ENCODE measurements at regions of chrX and their contacts with region 1.

Region 1: DNA sequence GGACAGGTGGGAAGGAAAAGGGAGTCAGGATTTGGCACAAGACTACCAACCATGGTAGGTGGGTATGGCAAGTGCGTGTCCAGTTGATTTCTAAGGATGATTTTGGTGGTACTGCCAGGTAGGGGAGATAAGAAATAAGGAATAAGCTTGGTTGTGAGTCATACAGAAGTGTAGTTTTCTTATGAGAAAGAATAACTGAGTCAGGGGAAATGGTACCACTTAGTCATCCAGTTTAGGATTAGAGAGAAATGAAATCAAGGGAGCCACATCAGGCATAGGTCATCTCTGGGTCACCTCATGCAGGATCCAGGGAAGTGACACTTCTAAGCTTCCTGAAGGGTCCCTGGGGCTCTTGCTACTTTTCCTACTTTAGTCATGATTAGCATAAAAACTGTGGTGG is 107.1 kb upstream of the C1GALT1C1 start:
- DNase-seq: peak in 1 of 2 experiments; percentile 83
- H3K4me3 ChIP-seq: peak overlapping the region; percentile 40; the same call in 1 of the 2 replicates
- H3K27ac ChIP-seq: peak overlapping the region; percentile 99
- H3K4me1 ChIP-seq: peaks cover 79% of the 10 kb centered on the region
- H3K27me3 ChIP-seq: no peaks in the 10 kb centered on the region
- CTCF ChIP-seq: no peak

Region 2: GRCh38 chrX:120308959-120309872 is 427.8 kb before region 1 on chrX:
- CTCF ChIA-PET with region 1: no interaction called
- POLR2A ChIA-PET with region 1: no interaction called
- intact Hi-C with region 1: loop called (anchors 10 kb)
- DNase-seq: peak in 1 of 2 experiments; percentile 75
- H3K4me3 ChIP-seq: peak overlapping the region; percentile 60
- H3K27ac ChIP-seq: no peak overlapping the region
- H3K4me1 ChIP-seq: 0 out of 2 replicates have a peak, but pooled peaks cover 3% of the 10 kb centered on the region
- H3K27me3 ChIP-seq: no peaks in the 10 kb centered on the region
- CTCF ChIP-seq: no peak; the same call in 1 of the 2 replicates

Region 3: GRCh38 chrX:120499301-120500072 is 237.5 kb before region 1 on chrX:
- CTCF ChIA-PET with region 1: no interaction called
- POLR2A ChIA-PET with region 1: no interaction called
- intact Hi-C with region 1: loop called (anchors 2 kb)
- DNase-seq: no peak
- H3K4me3 ChIP-seq: no peak overlapping the region
- H3K27ac ChIP-seq: no peak overlapping the region
- H3K4me1 ChIP-seq: peaks cover 9% of the 10 kb centered on the region
- H3K27me3 ChIP-seq: no peaks in the 10 kb centered on the region
- CTCF ChIP-seq: no peak

Region 4: DNA sequence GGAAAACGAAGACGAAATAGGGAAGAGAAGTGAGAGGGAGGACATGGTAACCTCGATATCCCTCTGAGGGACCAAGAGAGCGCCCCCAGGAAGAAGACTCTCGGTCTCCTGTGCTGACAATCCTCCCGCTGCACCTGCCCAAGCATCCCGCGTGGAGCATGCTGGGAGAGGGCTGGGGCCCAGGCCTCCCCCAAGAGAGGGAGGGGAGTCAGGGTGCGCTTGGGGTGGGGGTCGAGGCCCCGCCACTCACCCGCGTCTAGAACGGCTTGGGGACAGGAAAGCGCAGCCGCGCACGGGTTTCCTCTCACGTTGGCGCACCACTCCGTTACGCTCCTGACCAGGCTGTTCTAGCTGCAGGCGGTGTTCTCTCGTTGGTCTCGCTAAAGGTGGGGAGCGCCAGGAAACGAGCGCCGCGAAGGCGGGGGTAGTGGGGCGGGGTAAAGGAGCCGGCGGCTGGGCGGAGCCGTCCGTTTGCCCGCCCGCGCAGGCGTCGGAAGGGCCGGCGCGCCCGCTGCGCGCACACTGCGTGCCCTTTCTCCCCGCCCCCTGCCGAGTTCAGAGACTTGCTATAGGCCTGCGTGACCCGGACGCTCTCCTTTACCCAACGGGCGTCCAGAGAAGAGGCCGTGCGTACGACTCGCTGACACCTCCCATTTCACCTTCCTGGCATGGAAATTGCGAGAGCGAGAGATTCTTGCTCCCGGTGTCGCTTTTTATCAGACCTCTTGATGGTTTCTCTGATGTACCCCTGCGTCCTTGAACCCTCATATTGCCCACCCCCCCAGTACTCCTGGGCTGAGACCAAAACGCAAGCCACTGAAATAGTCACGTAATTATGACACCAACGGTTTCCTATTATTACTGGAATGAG is 107.1 kb before region 1 on chrX and contains the start of gene C1GALT1C1:
- CTCF ChIA-PET with region 1: interaction called, 3 read pairs
- POLR2A ChIA-PET with region 1: no interaction called
- intact Hi-C with region 1: loop called (anchors 1 kb)
- DNase-seq: peak; percentile 92 to 98
- H3K4me3 ChIP-seq: peak within 1 kb of the TSS; percentile 77
- H3K27ac ChIP-seq: peak within 1 kb of the TSS; percentile 87
- H3K4me1 ChIP-seq: peaks cover 23% of the 10 kb centered on the region
- H3K27me3 ChIP-seq: no peaks in the 10 kb centered on the region
- CTCF ChIP-seq: no peak
- total RNA-seq, gene C1GALT1C1: 32.7 and 38.4 TPM in 2 replicates

Region 5: GRCh38 chrX:120769576-120770341 is 32.8 kb after region 1 on chrX:
- CTCF ChIA-PET with region 1: interaction called, 9 read pairs
- POLR2A ChIA-PET with region 1: no interaction called
- intact Hi-C with region 1: loop called (anchors 1 kb)
- DNase-seq: peak; percentile 33 to 89
- H3K4me3 ChIP-seq: no peak overlapping the region
- H3K27ac ChIP-seq: peak overlapping the region; percentile 82
- H3K4me1 ChIP-seq: peaks cover 36% of the 10 kb centered on the region
- H3K27me3 ChIP-seq: no peaks in the 10 kb centered on the region
- CTCF ChIP-seq: peak; percentile 62

Region 6: DNA sequence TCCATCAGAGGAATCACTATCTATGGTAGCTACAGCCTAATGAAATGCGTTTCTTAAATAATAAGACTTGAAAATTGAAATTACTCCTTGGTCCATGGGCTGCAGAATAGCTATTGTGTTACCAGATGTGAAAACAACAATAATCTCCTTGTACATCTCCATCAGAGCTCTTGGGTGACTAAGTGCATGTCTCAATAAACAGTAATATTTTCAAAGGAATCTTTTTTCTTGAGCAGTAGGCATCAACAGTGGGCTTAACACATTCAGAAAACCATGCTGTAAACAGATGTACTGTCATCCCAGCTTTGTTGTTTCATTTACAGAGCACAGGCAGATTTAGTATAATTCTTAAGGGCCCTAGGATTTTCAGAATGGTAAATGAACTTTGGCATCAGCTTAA is 377.7 kb after region 1 on chrX:
- CTCF ChIA-PET with region 1: no interaction called
- POLR2A ChIA-PET with region 1: no interaction called
- intact Hi-C with region 1: no loop called
- DNase-seq: no peak
- H3K4me3 ChIP-seq: no peak overlapping the region
- H3K27ac ChIP-seq: no peak overlapping the region
- H3K4me1 ChIP-seq: no peaks in the 10 kb centered on the region
- H3K27me3 ChIP-seq: no peaks in the 10 kb centered on the region
- CTCF ChIP-seq: no peak

Measured in PC-9 (cell line).